HCT116 (cell line): ENCODE measurements at regions of chr4 and their contacts with region 1.

Region 1: DNA sequence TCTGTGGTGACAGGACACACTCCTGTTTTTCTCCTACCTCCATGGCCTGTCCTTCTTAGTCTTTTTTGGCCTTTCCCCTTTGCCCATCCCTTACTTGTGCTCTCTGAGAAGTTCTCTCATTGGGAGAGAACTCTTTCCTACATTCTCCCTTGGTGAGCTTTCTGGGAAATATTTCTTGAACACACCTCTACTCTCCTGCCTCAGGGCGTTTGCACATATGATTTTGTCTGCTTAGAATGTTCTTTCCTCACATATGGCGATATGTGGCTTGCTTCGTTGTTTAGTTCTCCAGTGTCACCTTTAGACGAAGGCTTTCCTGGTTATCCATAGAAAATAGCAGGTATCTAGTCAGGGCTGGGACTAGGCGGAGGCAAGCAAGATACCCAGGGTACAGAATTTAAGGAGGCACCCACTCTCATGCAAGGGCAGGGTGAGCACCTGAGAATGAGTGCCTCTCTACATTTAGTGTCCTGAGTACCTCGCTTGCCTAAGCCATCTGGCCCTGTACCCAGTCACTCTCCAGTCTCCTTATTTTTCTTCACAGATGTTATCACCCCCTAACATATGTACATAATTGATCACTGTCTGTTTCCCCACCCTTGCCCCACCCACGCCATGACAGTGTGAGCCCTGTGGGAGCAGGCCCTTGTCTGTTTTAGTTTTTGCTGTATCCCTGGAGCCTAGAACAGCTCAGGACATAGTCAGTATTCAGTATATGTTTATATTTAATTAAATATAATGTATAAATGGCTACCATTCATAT is 113.4 kb downstream of the SPRY1 start:
- DNase-seq: no peak
- ATAC-seq: no peak
- H3K4me3 ChIP-seq: no peak overlapping the region
- H3K27ac ChIP-seq: no peak overlapping the region
- H3K4me1 ChIP-seq: peaks cover under 1 to 11% of the 10 kb centered on the region in 2 experiments; a peak in 2 of 4 replicates
- H3K27me3 ChIP-seq: no peaks in the 10 kb centered on the region
- CTCF ChIP-seq: no peak
- POLR2A ChIP-seq: no peak
- RAD21 ChIP-seq: no peak

Region 2: DNA sequence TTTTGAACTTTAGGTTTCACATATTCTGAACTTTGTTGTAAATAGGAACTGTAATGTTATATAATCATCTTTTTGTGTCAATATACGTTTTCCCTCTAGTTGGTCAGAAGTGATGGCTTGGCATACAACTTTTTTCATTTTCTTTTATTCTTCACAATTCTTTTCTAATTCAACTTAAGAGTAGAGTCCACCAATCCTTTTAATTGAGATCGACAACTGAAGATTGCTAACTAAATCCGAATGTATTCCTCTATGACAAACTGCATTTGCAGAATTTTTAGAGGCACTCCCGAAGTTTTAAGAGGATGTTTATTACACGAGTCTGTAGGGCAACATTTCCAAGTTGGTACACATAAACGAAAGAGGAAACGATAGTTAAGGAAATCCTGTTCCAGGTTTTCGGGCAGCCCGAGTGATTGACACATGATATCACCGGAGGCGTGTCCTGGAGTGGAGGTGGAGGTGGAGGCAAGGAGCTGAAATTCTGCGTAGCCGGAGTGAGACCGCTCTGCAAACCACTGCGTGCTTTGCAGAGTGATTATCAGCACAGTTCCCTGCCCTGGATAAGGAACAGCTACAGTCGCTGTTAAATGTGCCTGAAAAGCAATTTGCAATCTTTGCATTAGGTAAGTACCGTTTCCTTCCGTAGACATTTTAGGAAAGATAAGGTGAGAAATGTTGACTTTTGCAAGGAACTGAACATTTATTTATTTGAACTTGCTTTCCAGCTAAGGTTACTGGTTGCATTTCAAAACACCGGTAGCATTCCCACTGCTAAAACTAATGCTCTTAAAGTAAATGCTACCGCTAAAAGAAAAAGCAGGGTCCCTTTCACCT is 113.5 kb before region 1 on chr4 and contains the start of gene SPRY1:
- CTCF ChIA-PET with region 1: interaction called, 3 read pairs
- POLR2A ChIA-PET with region 1: no interaction called
- RAD21 ChIA-PET with region 1: no interaction called
- intact Hi-C with region 1: loop called (anchors 2 kb)
- DNase-seq: peak; percentile 89
- ATAC-seq: peak; percentile 74
- H3K4me3 ChIP-seq: peak within 1 kb of the TSS; percentile 60 to 74
- H3K27ac ChIP-seq: peak within 1 kb of the TSS; percentile 50
- H3K4me1 ChIP-seq: peaks cover 3 to 30% of the 10 kb centered on the region in 2 experiments; a peak in 3 of 4 replicates
- H3K27me3 ChIP-seq: no peaks in the 10 kb centered on the region
- CTCF ChIP-seq: no peak
- POLR2A ChIP-seq: peak; percentile 75
- RAD21 ChIP-seq: no peak; the same call in 1 of the 2 replicates
- total RNA-seq, gene SPRY1: 4.8 TPM